SK-N-SH (cell line): ENCODE measurements at regions of chr15 and their contacts with region 1.

Region 1: DNA sequence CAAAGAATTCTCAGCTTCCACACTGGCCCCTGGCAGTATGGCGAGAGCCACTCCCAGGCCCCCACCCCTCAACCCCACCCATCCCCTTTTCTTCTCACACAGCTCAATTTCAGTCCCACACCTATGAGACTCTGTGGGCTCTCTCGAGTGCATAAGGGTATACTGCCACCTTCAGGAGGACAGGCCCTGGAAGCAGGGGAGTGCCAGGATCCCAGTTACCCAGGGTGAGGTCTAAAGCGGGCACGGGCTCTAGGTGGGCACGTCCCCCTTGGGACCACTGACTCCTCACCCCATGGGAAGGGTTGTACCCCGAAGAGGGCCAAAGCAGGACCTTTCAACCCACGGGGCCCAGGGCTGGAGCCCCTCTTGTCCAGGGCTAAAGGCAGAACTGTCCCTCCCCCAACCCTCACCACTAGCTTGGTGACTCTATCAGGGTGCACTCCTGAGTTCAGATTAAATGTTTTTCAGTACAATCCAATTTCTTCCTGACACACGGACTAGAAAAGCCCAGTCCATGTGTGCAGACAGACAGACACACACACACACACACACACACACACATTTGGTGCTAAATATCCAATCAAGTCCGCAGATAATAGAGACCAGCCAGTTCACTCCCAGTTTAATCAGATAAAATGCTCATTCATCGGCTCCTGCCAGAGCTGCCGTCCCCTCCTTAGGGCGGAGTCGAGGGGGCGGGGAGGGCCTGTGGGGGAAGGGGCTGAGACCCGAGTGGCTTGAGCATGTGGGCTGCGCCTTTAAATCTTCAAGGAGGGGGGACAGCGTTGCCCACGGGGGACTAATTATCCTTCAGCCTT is 59.4 kb downstream of the CYP11A1 start:
- DNase-seq: peak; percentile 87
- H3K4me3 ChIP-seq: peak overlapping the region in 1 of 2 experiments; percentile 13; a peak in 1 of 4 replicates
- H3K27ac ChIP-seq: peak overlapping the region in 1 of 2 experiments; percentile 95; a peak in 2 of 4 replicates
- H3K4me1 ChIP-seq: peaks cover 0 to 64% of the 10 kb centered on the region in 2 experiments; a peak in 2 of 4 replicates
- H3K27me3 ChIP-seq: no peaks in the 10 kb centered on the region
- CTCF ChIP-seq: peak; percentile 77
- EP300 ChIP-seq: no peak; a peak in 1 of 4 replicates
- RAD21 ChIP-seq: peak; percentile 90

Region 2: DNA sequence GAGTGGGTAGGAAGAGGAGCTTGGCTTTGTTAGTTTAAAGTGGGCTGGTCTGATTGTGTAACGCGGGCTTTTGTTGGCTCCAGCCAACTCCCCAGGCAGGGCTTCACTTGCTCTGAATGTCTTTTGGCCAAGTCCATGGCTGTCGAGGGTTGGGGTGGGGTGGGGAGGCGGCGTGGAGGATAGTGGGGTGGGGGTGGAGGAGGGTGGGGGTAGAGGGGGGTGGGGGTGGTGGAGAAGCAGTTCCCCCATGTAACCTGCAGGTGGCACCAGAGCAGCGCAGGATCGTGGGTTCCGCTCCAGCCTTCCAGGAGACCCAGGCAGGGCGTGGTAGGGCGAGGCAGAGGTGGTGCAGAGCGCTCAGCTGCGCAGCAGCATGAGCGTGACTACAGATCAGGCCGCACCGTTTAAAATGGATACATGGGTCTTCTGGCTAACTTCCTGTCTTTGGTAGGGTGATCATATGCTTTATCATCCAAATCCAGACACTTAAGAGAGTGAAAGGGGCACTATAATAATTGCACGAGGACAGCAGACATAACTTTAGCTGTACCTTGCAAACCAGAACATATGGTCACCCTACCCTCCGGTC is 254.0 kb before region 1 on chr15:
- CTCF ChIA-PET with region 1: interaction called, 31 read pairs
- POLR2A ChIA-PET with region 1: no interaction called
- DNase-seq: peak; percentile 94
- H3K4me3 ChIP-seq: peak overlapping the region in 1 of 2 experiments; percentile 8; a peak in 1 of 4 replicates
- H3K27ac ChIP-seq: peak overlapping the region in 1 of 2 experiments; percentile 35; a peak in 2 of 4 replicates
- H3K4me1 ChIP-seq: peaks cover 15 to 18% of the 10 kb centered on the region in 2 experiments; a peak in 3 of 4 replicates
- H3K27me3 ChIP-seq: no peaks in the 10 kb centered on the region
- CTCF ChIP-seq: peak; percentile 56
- EP300 ChIP-seq: no peak
- RAD21 ChIP-seq: peak; percentile 80

Region 3: DNA sequence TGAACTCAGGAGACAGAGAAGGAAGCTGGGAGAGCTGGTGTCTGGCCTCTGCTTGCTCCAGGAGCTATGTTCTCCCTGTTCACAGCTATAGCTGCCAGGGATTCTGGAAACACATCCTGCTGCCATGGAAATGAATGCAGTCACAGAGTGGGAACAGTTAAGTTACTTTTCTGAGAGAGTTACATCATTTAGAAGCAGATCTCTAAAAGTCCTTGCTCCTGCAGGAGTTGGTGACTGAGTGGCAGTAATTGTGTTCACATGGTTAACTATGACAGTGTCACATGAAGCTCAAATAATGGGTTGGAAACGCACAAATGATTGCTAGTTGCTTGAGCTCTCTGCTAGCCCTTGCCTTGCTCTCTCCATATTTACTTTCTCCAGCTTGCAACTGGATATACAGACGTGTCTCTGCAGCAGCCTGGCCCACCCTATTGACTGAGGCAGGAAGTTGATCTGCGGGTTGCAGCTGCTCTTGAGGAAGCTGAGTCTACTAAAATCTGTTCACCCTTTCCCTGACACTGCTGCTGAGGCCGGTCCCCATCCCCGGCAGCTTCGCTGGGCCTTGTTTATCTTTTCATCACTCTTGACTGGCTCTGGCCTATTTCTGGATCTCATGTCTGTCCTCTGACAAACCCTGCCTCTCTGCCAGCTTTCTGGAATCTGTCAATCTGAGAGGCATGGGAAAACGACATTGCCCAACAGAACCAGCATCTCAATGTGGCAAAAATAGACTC is 151.2 kb before region 1 on chr15:
- CTCF ChIA-PET with region 1: interaction called, 10 read pairs
- POLR2A ChIA-PET with region 1: no interaction called
- DNase-seq: peak; percentile 79
- H3K4me3 ChIP-seq: 0 out of 4 replicates have a peak overlapping the region, but pooled peaks of 1 of the 2 experiments have one; percentile 10
- H3K27ac ChIP-seq: peak overlapping the region; percentile 82 to 93
- H3K4me1 ChIP-seq: peaks cover 12 to 30% of the 10 kb centered on the region in 2 experiments; a peak in 3 of 4 replicates
- H3K27me3 ChIP-seq: no peaks in the 10 kb centered on the region
- CTCF ChIP-seq: no peak
- EP300 ChIP-seq: peak; percentile 43 to 94; a peak in 3 of 4 replicates
- RAD21 ChIP-seq: 0 out of 2 replicates have a peak, but pooled peaks have one; percentile 21

Region 4: DNA sequence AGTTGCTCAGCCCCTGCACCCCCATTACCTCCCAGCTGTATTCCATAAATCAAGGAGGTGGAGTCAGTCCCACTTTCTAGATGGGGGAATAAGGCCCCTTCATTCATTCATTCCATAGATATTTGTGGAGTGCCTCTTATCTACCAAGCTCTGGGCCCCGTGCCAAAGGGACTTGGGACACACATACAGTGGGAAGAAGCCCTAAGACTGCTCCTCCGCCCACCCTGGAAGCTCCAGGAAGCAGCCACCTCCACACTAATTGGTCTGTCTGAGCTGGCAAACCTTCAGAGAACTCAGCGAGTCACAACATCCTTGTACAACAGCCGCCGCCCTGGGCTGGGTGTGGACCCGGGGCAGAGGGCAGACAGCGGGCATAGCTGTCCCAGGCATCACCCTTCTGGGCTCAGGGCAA is 111.9 kb before region 1 on chr15:
- CTCF ChIA-PET with region 1: interaction called, 85 read pairs
- POLR2A ChIA-PET with region 1: interaction called, 9 read pairs
- DNase-seq: no peak
- H3K4me3 ChIP-seq: no peak overlapping the region
- H3K27ac ChIP-seq: peak overlapping the region; percentile 69 to 89
- H3K4me1 ChIP-seq: peaks cover 59 to 86% of the 10 kb centered on the region in 2 experiments
- H3K27me3 ChIP-seq: no peaks in the 10 kb centered on the region
- CTCF ChIP-seq: no peak
- EP300 ChIP-seq: no peak
- RAD21 ChIP-seq: no peak

Region 5: GRCh38 chr15:74228723-74229081 is 79.3 kb before region 1 on chr15:
- CTCF ChIA-PET with region 1: interaction called, 35 read pairs
- POLR2A ChIA-PET with region 1: interaction called, 3 read pairs
- DNase-seq: peak; percentile 87
- H3K4me3 ChIP-seq: no peak overlapping the region
- H3K27ac ChIP-seq: peak overlapping the region; percentile 72 to 100
- H3K4me1 ChIP-seq: peaks cover 35 to 84% of the 10 kb centered on the region in 2 experiments
- H3K27me3 ChIP-seq: no peaks in the 10 kb centered on the region
- CTCF ChIP-seq: no peak
- EP300 ChIP-seq: peak in 1 of 2 experiments; percentile 91; a peak in 3 of 4 replicates
- RAD21 ChIP-seq: peak; percentile 46

Region 6: DNA sequence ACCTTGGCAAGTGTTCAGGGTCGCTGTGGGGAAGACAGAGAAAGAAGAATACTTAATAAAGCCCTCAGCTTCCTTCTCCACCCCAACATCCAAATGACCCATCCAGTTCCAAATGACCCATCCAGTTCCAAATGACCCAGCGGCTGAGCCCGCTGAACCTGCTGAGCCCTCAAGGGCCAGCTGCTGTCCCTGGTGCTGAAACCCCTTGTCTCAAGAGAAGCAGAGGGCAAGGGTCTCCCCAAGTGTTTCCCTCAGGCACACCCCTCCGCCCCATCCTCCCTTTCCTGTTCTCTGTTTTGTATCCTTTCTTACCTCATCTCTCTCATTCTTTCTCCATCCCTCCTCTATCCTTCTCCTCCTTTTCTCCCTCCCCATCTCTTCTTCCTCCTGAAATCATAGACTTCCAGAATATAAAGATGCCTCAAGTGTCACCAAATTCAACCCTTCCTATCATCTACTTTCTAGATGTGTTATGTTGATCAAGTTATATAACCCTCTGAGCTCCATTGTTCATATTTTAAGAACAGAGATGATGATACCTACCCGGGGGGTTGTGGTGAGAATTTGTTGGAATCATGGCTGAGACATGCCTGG is 42.9 kb before region 1 on chr15:
- CTCF ChIA-PET with region 1: interaction called, 27 read pairs
- POLR2A ChIA-PET with region 1: interaction called, 3 read pairs
- DNase-seq: no peak
- H3K4me3 ChIP-seq: no peak overlapping the region
- H3K27ac ChIP-seq: peak overlapping the region in 1 of 2 experiments; percentile 79; a peak in 2 of 4 replicates
- H3K4me1 ChIP-seq: peaks cover 0 to 40% of the 10 kb centered on the region in 2 experiments; a peak in 2 of 4 replicates
- H3K27me3 ChIP-seq: peaks cover 4% of the 10 kb centered on the region; the same call in 1 of the 2 replicates
- CTCF ChIP-seq: no peak
- EP300 ChIP-seq: no peak
- RAD21 ChIP-seq: no peak

Region 7: DNA sequence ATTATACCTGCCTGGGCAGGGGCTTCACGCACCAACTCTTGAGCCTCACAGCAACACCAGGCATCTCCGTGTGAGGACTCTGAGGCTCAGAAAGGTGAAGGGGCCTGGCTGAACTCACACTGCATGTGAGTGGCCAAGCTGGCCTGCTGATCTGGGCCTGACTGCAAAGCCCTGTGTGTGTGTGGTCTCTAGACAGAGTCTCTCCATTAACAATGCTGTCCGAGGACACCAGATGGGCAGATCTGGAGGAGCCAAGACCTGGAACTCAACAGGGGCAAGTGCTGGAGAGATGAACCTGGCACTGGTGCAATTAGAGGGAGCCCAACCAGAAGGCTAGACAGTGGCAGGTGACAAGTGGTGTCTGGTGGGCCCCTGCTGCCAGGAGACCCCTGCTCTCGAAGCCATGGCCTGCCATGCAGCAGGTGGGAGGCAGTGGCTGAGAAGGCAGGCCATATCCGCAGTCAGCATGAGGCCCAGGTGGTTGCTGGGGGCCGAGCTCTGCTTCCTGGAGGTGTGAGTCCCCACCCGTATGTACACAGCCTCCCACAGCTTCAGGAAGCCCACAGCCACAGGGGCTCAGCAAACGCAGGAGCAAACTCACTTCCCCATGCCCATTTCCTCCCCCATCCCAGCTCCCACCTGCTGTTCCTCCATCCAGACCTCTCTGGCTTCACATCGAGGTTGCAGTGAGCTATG is 20.4 kb after region 1 on chr15:
- CTCF ChIA-PET with region 1: interaction called, 265 read pairs
- POLR2A ChIA-PET with region 1: no interaction called
- DNase-seq: no peak
- H3K4me3 ChIP-seq: no peak overlapping the region
- H3K27ac ChIP-seq: no peak overlapping the region
- H3K4me1 ChIP-seq: peaks cover 0 to 7% of the 10 kb centered on the region in 2 experiments; a peak in 1 of 4 replicates
- H3K27me3 ChIP-seq: no peaks in the 10 kb centered on the region
- CTCF ChIP-seq: no peak
- EP300 ChIP-seq: no peak
- RAD21 ChIP-seq: no peak

Region 8: DNA sequence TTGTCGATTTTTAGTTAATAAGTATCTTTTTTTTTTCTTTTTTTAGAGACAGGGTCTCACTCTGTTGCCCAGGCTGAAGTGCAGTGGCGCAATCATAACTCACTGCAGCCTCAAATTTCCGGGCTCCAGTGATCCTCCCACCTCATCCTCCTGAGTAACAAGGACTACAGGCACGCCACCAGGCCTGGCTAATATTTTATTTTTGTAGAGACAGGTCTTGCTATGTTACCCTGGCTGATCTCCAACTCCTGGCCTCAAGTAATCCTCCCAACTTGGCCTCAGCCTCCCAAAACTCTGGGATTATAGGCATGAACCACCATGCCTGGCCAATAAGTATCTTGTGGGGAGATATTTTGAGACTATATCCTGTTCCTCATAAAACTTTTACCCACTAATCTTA is 203.5 kb after region 1 on chr15:
- CTCF ChIA-PET with region 1: no interaction called
- POLR2A ChIA-PET with region 1: no interaction called
- DNase-seq: no peak
- H3K4me3 ChIP-seq: no peak overlapping the region
- H3K27ac ChIP-seq: no peak overlapping the region; a peak in 1 of 4 replicates
- H3K4me1 ChIP-seq: no peaks in the 10 kb centered on the region
- H3K27me3 ChIP-seq: no peaks in the 10 kb centered on the region
- CTCF ChIP-seq: no peak
- EP300 ChIP-seq: no peak
- RAD21 ChIP-seq: no peak

Region 9: DNA sequence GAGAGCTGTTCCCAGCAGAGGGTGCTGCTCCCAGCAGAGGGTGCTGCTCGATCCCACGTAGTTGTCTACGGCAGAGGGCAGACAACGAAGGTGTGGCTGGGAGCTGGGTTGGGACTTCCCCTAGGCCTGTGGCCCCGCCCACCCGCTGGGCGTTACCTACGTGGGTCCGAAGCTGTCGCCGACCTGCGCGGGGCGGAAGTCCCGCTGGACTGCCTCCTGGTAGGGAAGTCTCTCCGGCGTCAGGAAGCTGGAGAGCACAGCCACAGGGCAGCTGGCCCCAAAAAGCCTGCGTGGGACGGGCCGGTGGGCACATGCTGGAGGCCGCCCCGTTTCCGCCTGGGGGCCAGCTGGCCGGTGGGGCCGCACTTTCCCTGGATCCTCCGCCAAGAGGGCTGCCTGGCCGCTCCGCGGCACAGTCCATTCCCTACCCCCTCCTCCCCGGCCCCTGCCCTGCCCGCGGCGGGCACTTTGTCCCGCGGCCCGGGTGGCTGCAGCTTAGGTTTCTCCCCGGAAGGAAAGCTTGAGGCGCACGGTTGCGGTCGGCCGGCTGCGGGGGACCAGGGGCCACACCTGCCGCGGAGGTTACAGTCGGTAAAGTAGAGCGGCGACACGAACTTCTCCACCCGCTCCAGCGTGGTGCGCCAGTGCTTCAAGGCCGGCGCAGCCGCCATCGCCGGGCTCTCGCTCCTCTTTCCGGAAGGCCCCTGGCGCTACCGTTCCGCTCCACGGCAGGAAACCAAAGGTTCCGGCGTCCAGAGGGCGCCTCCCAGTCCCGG is 1060.1 kb after region 1 on chr15 and contains the start of gene MAN2C1:
- CTCF ChIA-PET with region 1: no interaction called
- POLR2A ChIA-PET with region 1: no interaction called
- DNase-seq: peak; percentile 96
- H3K4me3 ChIP-seq: peak within 1 kb of the TSS; percentile 73 to 92
- H3K27ac ChIP-seq: peak within 1 kb of the TSS; percentile 90 to 92
- H3K4me1 ChIP-seq: peaks cover 5 to 16% of the 10 kb centered on the region in 2 experiments; a peak in 3 of 4 replicates
- H3K27me3 ChIP-seq: no peaks in the 10 kb centered on the region
- CTCF ChIP-seq: peak; percentile 75; the same call in 1 of the 2 replicates
- EP300 ChIP-seq: 0 out of 4 replicates have a peak, but pooled peaks of 1 of the 2 experiments have one; percentile 61
- RAD21 ChIP-seq: peak; percentile 64
- polyA plus RNA-seq, gene MAN2C1: 132 and 169 TPM in 2 replicates